ENCODE measurements at regions of chr6 and their contacts with region 1.

Region 1: DNA sequence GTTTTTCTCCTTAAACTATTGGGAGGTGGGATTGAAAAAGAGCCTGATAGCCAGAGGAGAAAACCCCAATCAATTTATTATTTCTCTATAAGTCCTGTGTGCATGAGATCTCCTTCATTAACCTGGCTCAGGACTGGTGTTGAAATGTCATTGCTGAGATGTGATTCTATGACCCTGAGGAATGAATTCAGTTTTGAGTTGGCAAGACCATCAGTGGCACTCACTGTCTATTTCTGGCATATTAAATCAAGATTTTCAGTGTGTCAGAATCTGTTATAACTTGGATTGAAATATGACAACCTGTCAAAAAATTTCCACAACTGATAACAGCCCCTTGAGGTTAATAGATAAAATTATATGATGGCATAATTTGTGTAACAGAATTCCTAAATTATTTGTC is 431.1 kb downstream of the TFAP2B start:
- DNase-seq: no peak
- ATAC-seq: no peak
- H3K4me3 ChIP-seq: no peak overlapping the region
- H3K27ac ChIP-seq: no peak overlapping the region
- H3K4me1 ChIP-seq: 0 out of 2 replicates have a peak, but pooled peaks cover 6% of the 10 kb centered on the region
- H3K27me3 ChIP-seq: no peaks in the 10 kb centered on the region
- CTCF ChIP-seq: no peak
- EP300 ChIP-seq: no peak
- POLR2A ChIP-seq: no peak
- RAD21 ChIP-seq: no peak

Region 2: GRCh38 chr6:50864601-50865000 is 385.2 kb before region 1 on chr6:
- CTCF ChIA-PET with region 1: no interaction called
- POLR2A ChIA-PET with region 1: no interaction called
- in situ Hi-C with region 1: no loop called
- intact Hi-C with region 1: loop called (anchors 1 kb)
- DNase-seq: no peak
- ATAC-seq: no peak
- H3K4me3 ChIP-seq: no peak overlapping the region
- H3K27ac ChIP-seq: no peak overlapping the region
- H3K4me1 ChIP-seq: no peaks in the 10 kb centered on the region
- H3K27me3 ChIP-seq: no peaks in the 10 kb centered on the region
- CTCF ChIP-seq: no peak
- EP300 ChIP-seq: no peak
- POLR2A ChIP-seq: no peak
- RAD21 ChIP-seq: no peak

Measured in HepG2 (cell line).